Left ventricle myocardium inferior (tissue), 1 donor: ENCODE measurements at regions of chr21 and their contacts with region 1.

Region 1: GRCh38 chr21:41615613-41616012 is 107.7 kb upstream of the TMPRSS2 start:
- DNase-seq: no peak
- H3K4me3 ChIP-seq: no peak overlapping the region
- H3K27ac ChIP-seq: peak overlapping the region; percentile 12
- H3K4me1 ChIP-seq: peaks cover 21% of the 10 kb centered on the region
- H3K27me3 ChIP-seq: peaks cover 44% of the 10 kb centered on the region
- CTCF ChIP-seq: no peak

Region 2: GRCh38 chr21:41777951-41778874 is 162.6 kb after region 1 on chr21:
- intact Hi-C with region 1: loop called (anchors 5 kb)
- DNase-seq: peak; percentile 85
- H3K4me3 ChIP-seq: no peak overlapping the region
- H3K27ac ChIP-seq: no peak overlapping the region
- H3K4me1 ChIP-seq: peaks cover 10% of the 10 kb centered on the region
- H3K27me3 ChIP-seq: peaks cover 96% of the 10 kb centered on the region
- CTCF ChIP-seq: peak; percentile 98

Region 3: GRCh38 chr21:41816220-41817165 is 200.9 kb after region 1 on chr21:
- intact Hi-C with region 1: no loop called
- DNase-seq: peak; percentile 55
- H3K4me3 ChIP-seq: no peak overlapping the region
- H3K27ac ChIP-seq: no peak overlapping the region
- H3K4me1 ChIP-seq: peaks cover 4% of the 10 kb centered on the region
- H3K27me3 ChIP-seq: no peaks in the 10 kb centered on the region
- CTCF ChIP-seq: peak; percentile 87